SK-N-SH (cell line): ENCODE measurements at regions of chr12 and their contacts with region 1.

Region 1: DNA sequence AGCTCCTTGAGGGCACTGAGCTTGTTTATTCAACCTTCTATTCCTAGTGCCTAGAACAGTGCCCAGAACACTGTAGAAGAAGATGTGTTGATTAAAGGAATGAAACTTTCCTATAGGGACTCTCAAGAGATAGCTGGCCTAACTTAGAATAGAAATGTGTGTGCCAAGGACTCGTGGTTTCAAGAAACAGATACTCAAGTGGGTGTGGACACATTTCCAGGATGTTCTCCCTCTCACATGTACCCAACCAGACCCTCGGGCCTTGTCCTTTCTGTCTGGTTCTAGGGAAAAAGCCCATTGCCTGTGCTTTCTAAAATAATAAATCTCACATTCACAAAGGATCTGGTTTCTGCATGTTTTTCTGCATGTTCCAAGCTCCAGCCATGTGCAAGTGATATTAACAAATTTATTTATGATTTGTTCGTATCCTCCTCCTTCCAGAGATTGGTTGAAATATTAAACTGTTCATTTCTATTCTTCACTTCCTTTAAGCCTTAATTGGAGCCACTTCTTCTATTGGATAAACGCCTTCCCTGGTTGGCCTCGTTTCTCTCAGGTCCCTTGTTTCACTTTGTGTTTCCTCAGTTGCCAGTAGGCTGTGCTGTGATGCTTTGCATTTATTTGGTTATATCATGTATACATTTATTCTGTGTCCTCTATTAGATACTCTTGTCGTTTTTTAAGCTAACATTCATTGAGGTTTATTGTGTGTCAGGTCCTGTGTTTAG is 89.8 kb downstream of the CRADD start:
- DNase-seq: peak; percentile 41
- H3K4me3 ChIP-seq: no peak overlapping the region
- H3K27ac ChIP-seq: peak overlapping the region in 1 of 2 experiments; percentile 52; a peak in 2 of 4 replicates
- H3K4me1 ChIP-seq: peaks cover 0 to 21% of the 10 kb centered on the region in 2 experiments; a peak in 3 of 4 replicates
- H3K27me3 ChIP-seq: no peaks in the 10 kb centered on the region
- CTCF ChIP-seq: peak; percentile 76
- EP300 ChIP-seq: no peak
- RAD21 ChIP-seq: peak; percentile 87

Region 2: GRCh38 chr12:93785262-93786010 is 18.5 kb after region 1 on chr12:
- CTCF ChIA-PET with region 1: interaction called, 18 read pairs
- POLR2A ChIA-PET with region 1: no interaction called
- DNase-seq: no peak
- H3K4me3 ChIP-seq: peak overlapping the region in 1 of 2 experiments; percentile 24; a peak in 1 of 4 replicates
- H3K27ac ChIP-seq: peak overlapping the region; percentile 94 to 99
- H3K4me1 ChIP-seq: peaks cover 32 to 46% of the 10 kb centered on the region in 2 experiments
- H3K27me3 ChIP-seq: no peaks in the 10 kb centered on the region
- CTCF ChIP-seq: no peak
- EP300 ChIP-seq: peak in 1 of 2 experiments; percentile 96; a peak in 2 of 4 replicates
- RAD21 ChIP-seq: no peak

Region 3: GRCh38 chr12:93979189-93979588 is 212.2 kb after region 1 on chr12:
- CTCF ChIA-PET with region 1: interaction called, 20 read pairs
- POLR2A ChIA-PET with region 1: no interaction called
- DNase-seq: no peak
- H3K4me3 ChIP-seq: no peak overlapping the region
- H3K27ac ChIP-seq: no peak overlapping the region
- H3K4me1 ChIP-seq: no peaks in the 10 kb centered on the region; a peak in 1 of 4 replicates
- H3K27me3 ChIP-seq: no peaks in the 10 kb centered on the region
- CTCF ChIP-seq: peak; percentile 56
- EP300 ChIP-seq: no peak
- RAD21 ChIP-seq: peak; percentile 82

Region 4: DNA sequence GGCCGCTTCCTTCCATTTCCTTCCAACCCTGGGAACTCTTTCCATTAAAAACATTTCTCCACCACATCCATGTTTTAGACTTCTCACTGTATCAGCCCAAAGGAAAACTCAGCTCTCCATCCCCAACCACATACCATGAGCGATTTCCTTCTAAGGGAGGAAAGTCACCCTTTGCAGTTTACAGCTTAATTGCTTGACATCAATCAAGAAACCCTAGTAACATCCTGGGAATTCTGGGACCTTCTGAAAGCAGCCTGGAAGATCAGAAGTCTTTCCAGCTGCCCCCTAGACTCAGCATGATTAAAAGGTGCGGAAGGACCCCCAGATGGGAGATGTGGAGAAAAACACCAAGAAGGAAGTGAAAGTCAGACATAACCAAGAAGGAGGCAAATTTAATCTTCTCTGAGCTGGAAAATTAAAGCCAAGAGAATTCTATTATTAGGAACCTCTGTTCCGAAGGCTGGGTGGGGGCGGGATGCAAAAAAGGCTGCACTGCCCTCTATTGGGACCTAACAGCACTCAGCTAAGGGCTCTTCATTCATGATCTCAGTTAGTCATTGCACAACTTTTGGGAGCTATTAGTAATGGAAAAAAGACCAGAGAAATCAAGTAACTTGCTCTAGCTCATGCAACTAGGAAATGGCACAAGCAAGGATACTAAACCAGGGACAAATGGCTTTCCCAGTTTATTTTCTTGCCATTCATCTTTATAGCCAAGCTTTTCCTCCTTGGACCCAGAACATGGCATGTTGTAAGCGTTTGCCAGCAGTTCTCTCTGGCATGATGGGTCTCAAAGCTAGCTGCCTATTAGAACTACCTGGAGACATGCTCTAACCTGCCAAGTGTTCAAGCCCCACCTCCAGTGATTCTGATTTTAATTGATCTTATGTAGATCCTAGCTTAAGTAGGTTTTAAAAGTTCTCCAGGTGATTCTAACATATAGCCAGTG is 308.3 kb after region 1 on chr12:
- CTCF ChIA-PET with region 1: interaction called, 26 read pairs
- POLR2A ChIA-PET with region 1: no interaction called
- DNase-seq: peak; percentile 48
- H3K4me3 ChIP-seq: no peak overlapping the region
- H3K27ac ChIP-seq: peak overlapping the region in 1 of 2 experiments; percentile 11; a peak in 1 of 4 replicates
- H3K4me1 ChIP-seq: peaks cover 0 to 7% of the 10 kb centered on the region in 2 experiments; a peak in 2 of 4 replicates
- H3K27me3 ChIP-seq: no peaks in the 10 kb centered on the region
- CTCF ChIP-seq: peak; percentile 66
- EP300 ChIP-seq: no peak
- RAD21 ChIP-seq: peak; percentile 73